ENCODE measurements at regions of chr14 and their contacts with region 1.

Region 1: DNA sequence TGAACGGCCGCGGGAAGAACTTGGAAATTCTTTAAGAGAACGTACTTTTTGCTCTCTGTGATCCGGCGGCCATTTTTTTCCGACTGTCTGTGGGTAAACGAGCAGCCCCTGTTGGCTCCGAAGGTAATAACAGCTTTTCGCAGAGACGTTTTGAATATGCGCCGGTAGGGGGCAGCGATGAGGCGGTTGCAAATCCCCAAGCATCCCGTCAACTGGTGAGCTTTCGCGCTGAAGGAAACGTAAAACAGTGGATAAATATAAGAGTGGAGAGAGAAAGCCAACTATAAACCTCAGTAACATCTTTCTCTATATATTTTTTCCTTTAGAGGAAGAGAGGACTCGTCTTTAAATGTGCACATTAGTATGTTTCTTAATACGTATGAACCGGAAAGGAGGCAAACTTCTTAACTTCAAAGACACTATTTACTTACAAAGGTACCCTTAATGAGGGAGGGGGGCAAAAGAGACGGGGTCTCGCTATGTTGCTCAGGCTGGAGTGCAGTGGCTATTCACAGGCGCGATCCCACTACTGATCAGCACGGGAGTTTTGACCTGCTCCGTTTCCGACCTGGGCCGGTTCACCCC is 9.6 kb upstream of the NEMF start:
- DNase-seq: peak; percentile 81
- H3K4me3 Mint-ChIP-seq: no peak overlapping the region
- H3K27ac Mint-ChIP-seq: no peak overlapping the region
- H3K4me1 Mint-ChIP-seq: no peaks in the 10 kb centered on the region
- H3K27me3 Mint-ChIP-seq: no peaks in the 10 kb centered on the region
- CTCF ChIP-seq: peak; percentile 100

Region 2: DNA sequence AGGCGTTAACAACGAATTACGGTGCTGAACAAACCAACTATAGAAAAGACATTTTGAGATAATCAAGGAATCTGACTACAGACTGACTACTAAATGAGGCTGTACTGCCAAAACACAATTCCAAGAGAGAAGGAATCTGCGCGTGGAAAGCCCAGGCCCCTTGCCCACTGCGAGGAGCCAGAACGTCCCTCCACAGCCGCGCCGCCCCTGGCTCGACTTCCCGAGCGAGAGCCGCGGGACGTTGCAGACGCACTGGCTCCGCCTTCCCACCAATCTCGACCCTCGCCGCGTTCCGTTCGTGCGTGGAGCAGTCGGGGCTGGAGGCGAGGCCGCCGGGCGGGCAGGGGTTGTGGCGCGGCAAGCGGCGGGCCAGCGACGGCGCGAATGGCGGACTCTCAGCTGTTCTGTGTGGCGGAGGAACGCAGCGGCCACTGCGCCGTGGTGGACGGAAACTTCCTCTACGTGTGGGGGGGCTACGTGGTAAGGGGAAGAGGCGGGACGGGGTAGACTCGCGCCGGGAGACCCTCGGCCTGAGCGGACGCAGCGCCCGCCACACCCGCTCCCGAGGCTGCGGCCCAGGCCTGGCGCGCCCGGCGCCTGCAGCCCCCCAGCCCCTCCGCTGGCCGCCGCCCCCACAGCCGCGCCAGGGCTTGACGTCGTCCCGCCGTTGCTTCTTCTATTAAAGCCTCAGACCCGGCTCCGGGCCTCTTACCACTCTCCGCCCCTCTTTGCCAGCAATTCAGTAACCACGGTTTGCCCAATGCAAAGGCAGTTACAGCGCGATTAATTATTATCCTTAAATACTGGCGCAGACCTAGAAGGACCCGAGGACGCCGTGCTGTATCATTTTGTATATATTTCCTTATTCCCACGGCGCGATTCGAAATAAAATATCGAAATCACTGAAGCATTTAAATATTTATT is 169.1 kb before region 1 on chr14 and contains the start of gene KLHDC1:
- CTCF ChIA-PET with region 1: no interaction called
- POLR2A ChIA-PET with region 1: no interaction called
- intact Hi-C with region 1: no loop called
- DNase-seq: peak; percentile 51
- H3K4me3 Mint-ChIP-seq: peak within 1 kb of the TSS; percentile 53
- H3K27ac Mint-ChIP-seq: no peak within 1 kb of the TSS
- H3K4me1 Mint-ChIP-seq: peaks cover 5% of the 10 kb centered on the region
- H3K27me3 Mint-ChIP-seq: no peaks in the 10 kb centered on the region
- CTCF ChIP-seq: no peak
- total RNA-seq, gene KLHDC1: 0.35 and 0.52 TPM in 2 replicates

Region 3: DNA sequence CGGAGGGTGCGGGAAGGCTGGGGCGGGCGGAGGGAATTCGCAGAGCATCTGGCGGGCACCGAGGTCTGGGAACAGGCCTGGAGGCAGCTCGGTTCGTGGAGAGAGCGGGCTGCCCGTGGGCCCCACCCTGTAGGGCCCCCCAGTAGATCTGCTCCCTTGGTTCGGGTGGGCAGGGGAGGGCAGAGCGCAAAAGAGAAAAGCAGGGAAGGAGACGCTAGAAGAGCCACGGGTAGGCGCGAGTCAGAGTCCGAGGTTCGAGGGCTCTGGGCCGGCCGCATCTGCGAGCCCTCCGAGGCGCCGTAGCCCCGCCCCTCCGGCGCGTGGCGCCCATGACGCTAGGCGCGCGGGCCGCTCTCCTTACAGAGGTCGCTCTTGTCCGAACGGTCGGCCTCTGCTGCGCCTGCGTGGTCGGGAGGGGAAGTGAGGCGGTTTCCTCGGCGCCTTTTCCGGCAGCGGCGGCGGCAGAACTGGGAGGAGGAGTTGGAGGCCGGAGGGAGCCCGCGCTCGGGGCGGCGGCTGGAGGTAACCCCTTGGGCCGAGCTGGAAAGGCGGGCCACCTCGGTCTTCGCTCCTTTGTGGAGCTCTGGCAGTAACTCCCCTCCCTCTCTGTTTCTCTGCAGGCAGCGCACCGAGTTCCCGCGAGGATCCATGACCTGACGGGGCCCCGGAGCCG is 30.6 kb after region 1 on chr14 and contains the start of gene ARF6:
- CTCF ChIA-PET with region 1: interaction called, 19 read pairs
- POLR2A ChIA-PET with region 1: interaction called, 70 read pairs
- intact Hi-C with region 1: loop called (anchors 2 kb)
- DNase-seq: peak; percentile 97
- H3K4me3 Mint-ChIP-seq: peak within 1 kb of the TSS; percentile 92
- H3K27ac Mint-ChIP-seq: peak within 1 kb of the TSS; percentile 99
- H3K4me1 Mint-ChIP-seq: peaks cover 28% of the 10 kb centered on the region
- H3K27me3 Mint-ChIP-seq: no peaks in the 10 kb centered on the region
- CTCF ChIP-seq: no peak
- total RNA-seq, gene ARF6: 111 and 112 TPM in 2 replicates

Region 4: GRCh38 chr14:49977126-49977841 is 115.1 kb after region 1 on chr14:
- CTCF ChIA-PET with region 1: interaction called, 11 read pairs
- POLR2A ChIA-PET with region 1: interaction called, 28 read pairs
- intact Hi-C with region 1: no loop called
- DNase-seq: no peak
- H3K4me3 Mint-ChIP-seq: no peak overlapping the region
- H3K27ac Mint-ChIP-seq: no peak overlapping the region
- H3K4me1 Mint-ChIP-seq: peaks cover 23% of the 10 kb centered on the region
- H3K27me3 Mint-ChIP-seq: no peaks in the 10 kb centered on the region
- CTCF ChIP-seq: no peak

Region 5: DNA sequence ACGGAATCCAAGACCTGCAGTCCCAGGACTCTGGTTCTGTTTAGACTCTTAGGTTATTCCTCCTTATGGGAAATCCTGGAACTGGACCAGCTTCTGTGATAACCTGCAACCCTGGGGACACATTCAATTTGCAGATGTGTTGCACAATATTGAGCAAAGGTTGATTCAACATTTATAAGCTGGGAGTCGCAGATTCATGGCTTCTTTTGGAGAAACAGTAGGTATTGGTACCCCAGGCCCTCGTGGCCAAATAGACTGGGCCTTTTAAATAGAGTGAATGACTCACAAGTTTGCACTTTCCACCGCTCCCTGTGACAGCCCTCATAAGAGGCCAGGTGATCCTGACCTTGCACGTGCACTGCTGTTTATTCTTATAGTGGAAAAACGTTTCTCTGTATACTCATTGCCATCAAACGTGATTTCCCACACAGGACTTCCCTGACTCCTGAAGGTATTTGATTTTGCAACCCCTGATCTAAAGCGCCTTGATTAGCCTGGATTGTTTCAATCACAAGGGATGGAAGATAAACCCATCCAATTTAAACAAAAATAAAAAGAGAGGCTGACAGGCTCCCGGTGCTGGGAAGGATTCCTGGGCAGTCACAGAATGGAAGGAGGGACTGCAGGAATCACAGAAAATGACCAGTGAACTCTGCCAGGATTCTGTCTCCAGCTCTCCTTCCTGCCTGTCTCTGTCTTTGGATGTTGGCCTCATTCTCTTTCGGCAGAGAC is 156.2 kb after region 1 on chr14:
- CTCF ChIA-PET with region 1: interaction called, 31 read pairs
- POLR2A ChIA-PET with region 1: interaction called, 9 read pairs
- intact Hi-C with region 1: no loop called
- DNase-seq: peak; percentile 47
- H3K4me3 Mint-ChIP-seq: no peak overlapping the region
- H3K27ac Mint-ChIP-seq: peak overlapping the region; percentile 51
- H3K4me1 Mint-ChIP-seq: peaks cover 12% of the 10 kb centered on the region
- H3K27me3 Mint-ChIP-seq: no peaks in the 10 kb centered on the region
- CTCF ChIP-seq: no peak

Region 6: DNA sequence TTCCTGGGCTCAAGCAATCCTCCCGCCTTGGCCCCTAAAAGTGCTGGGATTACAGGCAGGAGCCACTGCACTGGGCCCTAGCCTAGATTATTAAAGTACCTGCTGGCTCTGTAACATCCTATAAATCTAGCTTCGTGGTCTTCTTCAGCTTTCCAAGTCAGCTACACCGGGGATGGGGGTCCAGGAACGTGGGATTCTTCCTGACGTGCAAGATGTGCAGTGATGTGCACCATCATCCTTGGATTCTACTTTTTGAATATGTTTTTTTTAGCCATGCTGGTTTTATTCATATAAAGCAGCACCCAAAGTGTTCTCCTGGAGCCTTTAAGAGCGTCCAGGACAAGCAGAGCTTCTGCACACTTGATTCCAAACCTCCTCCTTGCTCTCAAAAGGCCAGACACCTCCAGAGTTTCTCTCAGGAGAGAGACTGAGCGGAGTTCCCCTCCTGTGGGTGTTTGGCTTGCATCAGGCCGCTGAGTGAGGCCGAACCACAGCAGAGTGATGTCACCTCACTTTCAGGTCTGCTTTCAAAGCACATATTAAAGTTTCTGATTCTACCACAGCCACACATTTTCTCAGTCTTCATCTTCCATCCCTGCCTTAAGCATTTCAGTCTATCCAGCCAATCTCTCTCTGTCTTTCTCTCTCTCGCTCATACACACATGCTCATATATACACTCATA is 220.7 kb after region 1 on chr14:
- CTCF ChIA-PET with region 1: interaction called, 57 read pairs
- POLR2A ChIA-PET with region 1: interaction called, 44 read pairs
- intact Hi-C with region 1: no loop called
- DNase-seq: no peak
- H3K4me3 Mint-ChIP-seq: no peak overlapping the region
- H3K27ac Mint-ChIP-seq: no peak overlapping the region
- H3K4me1 Mint-ChIP-seq: peaks cover 26% of the 10 kb centered on the region
- H3K27me3 Mint-ChIP-seq: no peaks in the 10 kb centered on the region
- CTCF ChIP-seq: no peak

Region 7: DNA sequence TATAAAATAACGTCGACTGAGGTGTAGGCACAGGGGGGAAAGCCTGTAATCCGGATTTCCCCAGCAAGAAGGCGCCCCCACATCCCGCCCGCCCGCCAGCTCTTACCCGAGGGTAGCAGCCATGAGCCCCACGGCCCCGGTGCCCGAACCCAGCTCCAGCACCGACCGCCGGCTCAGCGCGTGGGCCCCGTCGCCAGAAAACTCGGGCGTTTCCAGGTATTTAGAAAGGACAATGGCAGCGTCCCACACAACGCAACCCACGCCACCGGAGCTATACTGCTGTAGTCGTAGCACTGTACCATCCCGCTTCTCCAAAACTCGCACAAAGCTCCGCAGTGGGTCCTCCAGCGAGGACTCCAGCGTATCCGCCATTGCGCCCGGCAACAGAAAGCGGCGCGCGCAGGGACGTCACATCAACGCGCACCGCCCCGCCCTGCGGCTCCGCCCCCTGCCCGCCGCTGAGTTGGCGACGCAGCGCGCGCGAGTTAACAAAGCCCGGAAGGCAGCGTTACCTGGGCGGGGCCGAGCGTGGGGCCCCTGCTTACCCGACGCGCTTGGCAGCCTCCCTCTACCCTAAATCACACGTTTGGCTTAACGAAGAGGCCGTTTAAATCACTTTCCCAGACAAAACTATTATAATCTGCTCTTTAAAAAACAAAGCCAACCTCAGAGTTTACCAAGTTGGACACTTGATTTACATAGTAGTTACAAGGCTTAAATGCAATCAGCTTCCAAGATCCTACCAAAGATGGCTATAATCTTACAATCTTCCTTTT is 254.2 kb after region 1 on chr14 and contains the start of gene VCPKMT:
- CTCF ChIA-PET with region 1: interaction called, 19 read pairs
- POLR2A ChIA-PET with region 1: interaction called, 47 read pairs
- intact Hi-C with region 1: no loop called
- DNase-seq: peak; percentile 90
- H3K4me3 Mint-ChIP-seq: peak within 1 kb of the TSS; percentile 93
- H3K27ac Mint-ChIP-seq: peak within 1 kb of the TSS; percentile 99
- H3K4me1 Mint-ChIP-seq: no peaks in the 10 kb centered on the region
- H3K27me3 Mint-ChIP-seq: no peaks in the 10 kb centered on the region
- CTCF ChIP-seq: no peak
- total RNA-seq, gene VCPKMT: 7.2 and 10.4 TPM in 2 replicates

Region 8: GRCh38 chr14:50403419-50403818 is 541.2 kb after region 1 on chr14:
- CTCF ChIA-PET with region 1: no interaction called
- POLR2A ChIA-PET with region 1: no interaction called
- intact Hi-C with region 1: no loop called
- DNase-seq: no peak
- H3K4me3 Mint-ChIP-seq: no peak overlapping the region
- H3K27ac Mint-ChIP-seq: no peak overlapping the region
- H3K4me1 Mint-ChIP-seq: no peaks in the 10 kb centered on the region
- H3K27me3 Mint-ChIP-seq: no peaks in the 10 kb centered on the region
- CTCF ChIP-seq: no peak

Measured in MCF 10A (cell line).